H1 (cell line): ENCODE measurements at regions of chr10 and their contacts with region 1.

Region 1: GRCh38 chr10:32958085-32959005 is at the start of gene ITGB1:
- DNase-seq: peak; percentile 87 to 95
- H3K4me3 ChIP-seq: peak within 1 kb of the TSS; percentile 84 to 95 (median 88)
- H3K27ac ChIP-seq: peak within 1 kb of the TSS; percentile 97
- H3K4me1 ChIP-seq: peaks cover 4 to 26% (median 12%) of the 10 kb centered on the region in 4 experiments; a peak in 5 of 7 replicates
- H3K27me3 ChIP-seq: no peaks in the 10 kb centered on the region
- CTCF ChIP-seq: no peak
- EP300 ChIP-seq: no peak
- POLR2A ChIP-seq: peak; percentile 57 to 75
- RAD21 ChIP-seq: no peak
- total RNA-seq, gene ITGB1: 282 and 321 TPM in 2 replicates

Region 2: DNA sequence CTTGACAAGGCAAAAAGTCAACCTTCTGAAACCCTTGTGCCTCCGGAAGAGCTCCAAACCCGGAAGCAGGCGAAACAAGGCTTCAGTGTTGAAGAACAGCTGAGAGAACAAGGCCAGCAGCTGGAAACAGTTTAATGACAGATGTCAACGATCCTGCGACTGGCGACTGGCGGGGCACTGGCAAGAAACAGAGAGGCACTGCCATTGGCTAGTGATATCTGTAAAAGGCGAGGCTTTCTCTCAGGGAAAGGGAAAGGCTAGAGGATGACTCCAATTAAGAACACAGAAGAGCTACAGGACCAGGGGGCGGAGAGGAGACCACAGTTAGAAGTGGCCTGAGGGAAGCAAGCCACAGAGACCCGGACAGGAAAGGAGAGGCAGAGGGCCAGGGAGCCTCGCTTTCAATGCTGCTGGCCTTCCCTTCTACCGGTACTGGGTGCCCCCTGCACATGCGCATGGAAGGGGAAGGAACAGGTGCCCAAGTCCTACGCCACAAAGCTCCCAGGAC is 19.7 kb before region 1 on chr10:
- CTCF ChIA-PET with region 1: interaction called, 4 read pairs
- POLR2A ChIA-PET with region 1: interaction called, 19 read pairs
- DNase-seq: no peak
- H3K4me3 ChIP-seq: no peak overlapping the region
- H3K27ac ChIP-seq: no peak overlapping the region
- H3K4me1 ChIP-seq: peaks cover 0 to 18% (median 12%) of the 10 kb centered on the region in 4 experiments; a peak in 5 of 7 replicates
- H3K27me3 ChIP-seq: no peaks in the 10 kb centered on the region
- CTCF ChIP-seq: no peak
- EP300 ChIP-seq: no peak
- POLR2A ChIP-seq: no peak; a peak in 1 of 3 replicates
- RAD21 ChIP-seq: no peak

Region 3: DNA sequence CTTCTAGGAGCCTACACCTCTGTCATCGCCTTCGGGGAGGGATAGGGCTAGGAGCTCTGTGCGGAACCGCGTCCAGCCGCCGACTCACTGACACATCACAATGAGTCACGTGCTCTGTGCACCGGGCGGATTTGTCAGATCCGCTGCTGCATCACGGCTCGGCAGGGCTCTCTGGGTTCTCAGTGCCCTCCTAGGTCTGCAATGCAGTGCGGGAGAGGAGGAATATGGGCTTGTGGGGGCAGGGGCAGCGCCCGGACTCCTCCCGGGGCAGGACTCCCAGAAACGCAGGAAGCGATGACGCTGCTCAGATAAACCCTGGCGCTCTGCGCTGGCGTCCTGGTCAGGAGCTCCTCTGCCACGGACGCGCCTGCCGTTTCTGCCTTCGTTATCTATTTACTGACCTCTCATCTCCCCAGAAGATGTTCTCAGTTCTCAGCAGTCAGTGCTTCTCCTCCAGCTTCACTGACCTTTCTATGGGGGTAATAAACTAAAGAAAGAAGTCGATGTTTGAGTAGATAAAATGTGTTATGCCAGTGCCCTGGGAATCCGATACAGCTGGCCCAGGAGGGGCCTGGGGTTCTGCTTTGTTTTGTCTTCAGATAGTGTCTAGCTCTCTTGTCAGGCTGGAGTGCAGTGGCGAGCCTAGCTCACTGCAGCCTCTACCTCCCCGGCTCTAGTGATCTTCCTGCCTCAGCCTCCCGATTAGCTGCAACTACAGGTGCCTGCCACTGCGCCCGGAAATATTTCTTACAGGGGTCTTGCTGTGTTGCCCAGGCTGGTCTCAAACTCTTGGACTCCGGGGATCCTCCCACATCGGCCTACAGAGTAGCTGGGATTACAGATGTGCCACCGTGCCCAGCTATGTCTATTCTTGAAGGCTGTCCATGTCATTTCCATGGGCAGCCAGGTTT is 22.5 kb after region 1 on chr10:
- CTCF ChIA-PET with region 1: interaction called, 4 read pairs
- POLR2A ChIA-PET with region 1: interaction called, 26 read pairs
- DNase-seq: peak; percentile 85 to 88
- H3K4me3 ChIP-seq: peak overlapping the region; percentile 36 to 62 (median 59); a peak in 7 of 8 replicates
- H3K27ac ChIP-seq: peak overlapping the region; percentile 34; the same call in 1 of the 2 replicates
- H3K4me1 ChIP-seq: peaks cover 0 to 9% (median 2%) of the 10 kb centered on the region in 4 experiments; a peak in 4 of 7 replicates
- H3K27me3 ChIP-seq: no peaks in the 10 kb centered on the region
- CTCF ChIP-seq: no peak
- EP300 ChIP-seq: no peak
- POLR2A ChIP-seq: peak in 1 of 2 experiments; percentile 80; a peak in 2 of 3 replicates
- RAD21 ChIP-seq: no peak